Activated T-helper 1 cell treated with anti-CD3 and anti-CD28 coated beads, Interleukin-12 subunit alpha, Interleukin-12 subunit beta, Interleukin-2, Interleukin-4 antibody, amounts not matched to agents 30 ng/mL and 10 ng/mL and 1 ng/mL, durations not matched to agents 14 hours and 24 hours and 36 hours (primary cell): ENCODE measurements at regions of chr4 and their contacts with region 1.

Region 1: DNA sequence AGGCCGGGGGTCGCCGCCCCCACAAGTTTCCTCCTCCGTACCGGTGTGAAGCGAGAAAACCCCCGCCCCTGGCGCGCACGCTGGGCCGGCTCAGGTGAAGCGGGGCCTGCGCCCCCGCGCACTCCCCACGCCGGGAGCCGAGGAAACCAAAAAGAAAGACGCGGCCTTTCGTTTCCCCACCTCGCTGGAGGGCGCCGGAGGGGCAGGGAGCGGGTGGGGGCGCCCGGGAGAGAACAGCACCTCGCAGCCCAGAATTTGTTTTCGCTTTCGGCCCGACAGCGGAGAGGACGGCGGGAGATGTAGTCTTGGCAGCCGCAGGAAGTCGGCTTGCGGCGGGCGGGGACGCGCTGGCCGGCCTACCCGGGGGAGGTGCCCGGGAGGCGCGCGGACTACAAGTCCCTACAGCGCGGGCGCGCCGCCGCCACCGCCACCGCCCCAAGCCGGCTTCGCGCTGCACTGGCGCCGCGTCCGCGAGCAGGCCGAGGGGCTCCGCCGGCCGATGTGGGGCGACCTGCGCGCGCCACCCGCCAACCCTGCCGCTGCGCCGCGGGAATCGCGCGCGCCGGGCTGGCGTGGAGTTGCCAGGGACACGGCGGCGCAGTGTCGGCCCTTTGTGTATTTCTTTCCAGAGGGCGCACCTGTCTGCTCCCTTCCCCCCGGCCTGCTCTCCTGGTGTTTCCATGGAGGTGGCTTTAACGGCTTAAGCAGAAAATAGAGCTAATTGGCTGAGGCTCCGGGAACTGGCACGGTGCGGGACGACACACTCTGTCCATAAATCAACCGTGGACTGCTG is at the start of gene OTUD4:
- DNase-seq: peak; percentile 95
- H3K4me3 Mint-ChIP-seq: peak within 1 kb of the TSS; percentile 99
- H3K27ac Mint-ChIP-seq: peak within 1 kb of the TSS; percentile 99
- H3K4me1 Mint-ChIP-seq: peaks cover 29% of the 10 kb centered on the region
- H3K27me3 Mint-ChIP-seq: peaks cover 2% of the 10 kb centered on the region
- total RNA-seq, gene OTUD4: 76.9 and 80.9 TPM in 2 replicates

Region 2: DNA sequence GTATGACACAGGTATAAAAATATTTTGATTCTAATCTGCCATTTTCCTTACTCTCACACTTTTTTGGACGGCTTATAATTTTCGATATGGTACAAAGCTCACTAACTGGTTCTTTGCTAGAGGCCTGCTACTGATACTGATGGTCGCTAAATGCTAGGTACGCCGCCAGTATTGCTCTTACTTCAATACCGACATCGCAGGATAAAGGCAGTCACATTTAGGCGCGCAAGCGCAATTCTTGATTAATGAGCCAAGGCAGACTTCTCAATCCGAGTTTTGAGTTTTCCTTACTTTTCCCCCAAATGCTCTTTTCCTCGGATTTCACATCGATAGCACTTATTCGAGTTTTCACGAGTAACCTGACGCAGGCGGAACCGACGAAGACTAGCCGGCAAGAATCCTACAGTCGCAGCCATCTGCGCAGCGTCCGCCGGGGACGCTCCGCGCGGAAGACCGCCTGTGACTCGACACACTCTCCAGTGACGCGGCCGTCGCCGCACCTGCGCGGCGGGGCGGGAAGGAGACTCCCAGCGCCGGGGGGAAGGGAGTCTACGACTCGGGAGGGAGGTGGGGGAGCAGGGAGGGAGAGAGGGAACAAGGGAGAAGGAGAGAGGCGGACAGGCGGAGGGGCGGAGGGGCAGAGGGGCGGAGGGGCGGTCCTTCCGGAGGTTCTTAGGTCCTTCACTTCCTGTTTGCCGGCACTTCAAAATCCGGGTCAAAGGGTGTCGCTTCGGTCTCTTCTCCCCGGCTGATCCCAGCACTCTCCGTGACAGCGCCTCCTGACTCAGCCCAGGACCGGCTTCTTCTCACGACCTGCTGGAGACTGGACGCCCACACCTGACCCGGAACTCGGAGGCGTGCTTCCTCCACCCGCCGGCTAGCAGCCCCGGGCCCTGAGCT is 1996.0 kb before region 1 on chr4 and contains the start of gene USP38:
- intact Hi-C with region 1: loop called (anchors 5 kb)
- DNase-seq: peak; percentile 80
- H3K4me3 Mint-ChIP-seq: peak within 1 kb of the TSS; percentile 92
- H3K27ac Mint-ChIP-seq: peak within 1 kb of the TSS; percentile 98
- H3K4me1 Mint-ChIP-seq: peaks cover 62% of the 10 kb centered on the region
- H3K27me3 Mint-ChIP-seq: no peaks in the 10 kb centered on the region
- total RNA-seq, gene USP38: 29.8 and 32.0 TPM in 2 replicates

Region 3: DNA sequence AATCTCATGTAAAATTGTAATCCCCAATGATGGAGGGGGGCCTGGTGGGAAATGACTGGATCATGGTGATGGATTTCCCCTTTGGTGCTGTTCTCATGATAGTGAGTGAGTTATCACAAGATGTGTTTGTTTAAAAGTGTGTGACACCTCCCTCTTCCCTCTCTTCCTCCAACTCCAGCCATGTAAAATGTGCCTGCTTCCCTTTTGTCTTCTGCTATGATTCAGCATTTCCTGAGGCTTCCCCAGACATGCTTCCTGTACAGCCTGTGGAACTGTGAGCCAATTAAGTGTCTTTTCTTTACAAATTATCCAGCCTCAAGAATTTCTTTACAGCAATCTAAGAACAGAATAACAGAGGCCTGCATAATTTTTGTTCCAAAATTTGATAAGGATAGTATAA is 167.7 kb before region 1 on chr4:
- intact Hi-C with region 1: loop called (anchors 10 kb)
- DNase-seq: no peak
- H3K4me3 Mint-ChIP-seq: no peak overlapping the region
- H3K27ac Mint-ChIP-seq: peak overlapping the region; percentile 53
- H3K4me1 Mint-ChIP-seq: peaks cover 14% of the 10 kb centered on the region
- H3K27me3 Mint-ChIP-seq: no peaks in the 10 kb centered on the region

Region 4: GRCh38 chr4:145299380-145300076 is 119.0 kb after region 1 on chr4:
- intact Hi-C with region 1: loop called (anchors 1 kb)
- DNase-seq: peak; percentile 2
- H3K4me3 Mint-ChIP-seq: no peak overlapping the region
- H3K27ac Mint-ChIP-seq: no peak overlapping the region
- H3K4me1 Mint-ChIP-seq: peaks cover 17% of the 10 kb centered on the region
- H3K27me3 Mint-ChIP-seq: peaks cover 6% of the 10 kb centered on the region

Region 5: DNA sequence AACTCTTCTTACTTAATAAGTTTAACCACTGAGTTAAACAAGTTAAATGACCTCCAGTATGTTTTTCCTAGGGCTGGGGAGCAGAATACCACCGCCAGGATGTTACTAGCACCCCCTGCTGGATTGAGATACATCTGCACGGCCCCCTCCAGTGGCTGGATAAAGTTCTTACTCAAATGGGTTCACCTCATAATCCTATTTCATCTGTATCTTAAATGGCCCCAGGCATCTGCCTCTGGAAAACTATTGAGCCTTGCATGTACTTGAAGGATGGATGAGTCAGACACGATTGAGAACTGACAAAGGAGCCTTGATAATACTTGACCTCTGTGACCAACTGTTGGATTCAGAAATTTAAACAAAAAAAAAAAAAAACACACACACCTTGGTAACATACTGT is 377.2 kb after region 1 on chr4:
- intact Hi-C with region 1: loop called (anchors 1 kb)
- DNase-seq: peak; percentile 26
- H3K4me3 Mint-ChIP-seq: no peak overlapping the region
- H3K27ac Mint-ChIP-seq: no peak overlapping the region
- H3K4me1 Mint-ChIP-seq: peaks cover 1% of the 10 kb centered on the region
- H3K27me3 Mint-ChIP-seq: no peaks in the 10 kb centered on the region

Region 6: DNA sequence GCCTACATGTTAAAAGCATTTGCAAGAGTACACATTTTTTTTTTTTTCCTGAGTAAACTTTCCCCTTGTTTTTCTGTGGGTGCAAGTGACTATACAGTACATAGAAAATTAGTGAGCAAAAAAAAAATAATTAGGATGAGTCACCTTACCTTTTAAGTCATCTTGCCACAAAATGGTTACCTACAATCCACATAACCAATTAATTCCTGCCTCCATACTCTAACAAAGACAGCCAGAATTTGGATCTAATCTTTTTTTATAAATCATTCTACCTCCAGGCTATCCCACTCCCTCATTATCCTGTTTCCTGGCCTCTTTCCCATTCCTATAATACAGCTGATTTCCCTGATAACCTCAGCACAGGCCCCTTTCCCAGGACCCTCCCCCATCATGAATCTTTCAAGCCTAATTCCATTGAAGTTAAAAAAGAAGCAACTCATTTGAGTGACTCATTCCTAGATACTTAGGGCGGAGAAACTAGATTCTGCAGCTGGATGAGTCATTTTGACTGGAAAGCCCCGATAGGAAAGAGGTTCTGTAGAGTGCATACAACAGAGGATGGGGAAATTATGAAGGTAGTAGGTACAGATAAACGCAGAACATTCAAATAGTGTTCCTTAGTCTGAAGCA is 627.6 kb after region 1 on chr4:
- intact Hi-C with region 1: loop called (anchors 1 kb)
- DNase-seq: peak; percentile 56
- H3K4me3 Mint-ChIP-seq: peak overlapping the region; percentile 49
- H3K27ac Mint-ChIP-seq: peak overlapping the region; percentile 96
- H3K4me1 Mint-ChIP-seq: peaks cover 47% of the 10 kb centered on the region
- H3K27me3 Mint-ChIP-seq: no peaks in the 10 kb centered on the region

Region 7: DNA sequence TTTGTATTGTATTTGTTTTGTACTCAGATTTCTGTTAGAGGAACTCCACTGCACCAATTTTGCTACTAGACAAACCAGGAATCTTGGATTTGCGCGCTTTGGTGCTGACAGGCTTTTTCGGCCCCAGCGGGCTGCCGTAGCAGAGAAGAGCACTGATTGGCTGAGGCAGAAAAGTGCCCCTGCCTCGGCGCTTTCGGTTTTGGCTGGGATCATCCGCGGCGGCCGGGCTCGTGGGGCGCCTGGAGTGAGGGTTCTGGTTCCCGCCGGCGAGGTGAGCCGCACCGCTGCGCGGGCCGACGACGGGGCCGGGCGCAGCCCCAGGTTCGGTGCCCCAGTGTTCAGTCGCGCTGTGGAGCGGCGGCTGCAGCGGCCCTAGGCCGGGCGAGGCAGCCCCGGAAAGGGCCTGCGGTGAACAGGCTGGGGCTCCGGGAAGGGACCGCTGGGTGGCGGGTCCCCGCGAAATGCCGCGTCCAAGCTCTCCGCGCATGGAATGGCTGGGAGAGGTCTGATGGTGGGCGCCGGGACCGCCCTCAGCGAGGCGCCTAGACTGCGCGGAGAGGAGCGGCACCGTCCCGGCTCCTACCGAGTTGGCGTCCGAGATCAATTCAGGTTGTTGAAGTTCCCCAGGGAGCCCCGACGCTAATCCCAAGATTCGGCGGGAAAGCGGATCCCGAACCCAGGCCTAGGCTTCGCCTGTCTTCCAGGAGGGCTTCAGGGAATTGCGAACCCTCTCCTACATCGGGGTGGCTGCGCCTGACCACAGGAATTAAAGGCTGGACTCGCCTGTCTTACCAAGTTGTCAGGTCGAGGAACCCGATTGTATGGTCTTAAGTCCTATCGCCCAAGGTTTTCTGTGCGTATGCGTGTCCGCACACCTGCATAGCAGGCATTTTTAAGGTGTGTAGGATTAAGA is 995.3 kb after region 1 on chr4 and contains the start of gene LSM6:
- intact Hi-C with region 1: loop called (anchors 5 kb)
- DNase-seq: peak; percentile 77
- H3K4me3 Mint-ChIP-seq: peak within 1 kb of the TSS; percentile 88
- H3K27ac Mint-ChIP-seq: peak within 1 kb of the TSS; percentile 81
- H3K4me1 Mint-ChIP-seq: peaks cover 40% of the 10 kb centered on the region
- H3K27me3 Mint-ChIP-seq: no peaks in the 10 kb centered on the region
- total RNA-seq, gene LSM6: 62.9 and 65.0 TPM in 2 replicates